BJ (cell line): ENCODE measurements at regions of chr7 and their contacts with region 1.

Region 1: DNA sequence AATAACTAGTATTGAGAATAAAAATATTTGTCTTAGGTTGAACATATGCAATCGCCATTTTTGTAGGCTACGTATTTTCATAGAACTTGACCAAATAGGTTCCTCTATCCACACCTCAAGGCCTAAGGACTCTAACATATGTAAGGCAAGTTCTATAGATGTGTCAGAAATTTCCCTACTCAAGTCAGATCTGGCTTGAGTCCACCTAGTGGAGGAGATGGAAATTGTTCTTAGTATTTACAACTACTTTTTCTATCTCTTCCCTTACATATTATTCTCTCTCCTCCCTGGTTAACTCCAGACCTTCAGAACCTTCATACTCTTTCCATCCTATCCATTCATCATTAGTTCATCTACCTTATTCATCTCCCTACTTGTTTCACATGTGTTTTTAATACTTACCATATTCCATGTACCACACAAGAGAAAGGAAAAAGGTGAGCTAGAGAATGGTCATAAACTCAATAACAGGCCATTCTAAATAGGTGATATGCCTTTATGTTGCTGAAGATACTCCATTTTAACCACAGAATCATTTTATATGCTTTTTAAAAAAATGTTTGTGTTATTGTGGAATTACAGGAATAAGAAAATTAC is 174.5 kb upstream of the HDAC9 start:
- DNase-seq: no peak
- H3K4me3 ChIP-seq: no peak overlapping the region
- H3K27me3 ChIP-seq: no peaks in the 10 kb centered on the region
- CTCF ChIP-seq: peak; percentile 63

Region 2: GRCh38 chr7:18276383-18276782 is 44.7 kb before region 1 on chr7:
- CTCF ChIA-PET with region 1: no interaction called
- POLR2A ChIA-PET with region 1: no interaction called
- DNase-seq: no peak
- H3K4me3 ChIP-seq: no peak overlapping the region
- H3K27me3 ChIP-seq: no peaks in the 10 kb centered on the region
- CTCF ChIP-seq: no peak

Region 3: GRCh38 chr7:18308938-18309337 is 12.1 kb before region 1 on chr7:
- CTCF ChIA-PET with region 1: interaction called, 10 read pairs
- POLR2A ChIA-PET with region 1: no interaction called
- DNase-seq: no peak
- H3K4me3 ChIP-seq: no peak overlapping the region
- H3K27me3 ChIP-seq: peaks cover 2% of the 10 kb centered on the region; the same call in 1 of the 2 replicates
- CTCF ChIP-seq: no peak

Region 4: GRCh38 chr7:18336626-18337025 is 15.6 kb after region 1 on chr7:
- CTCF ChIA-PET with region 1: no interaction called
- POLR2A ChIA-PET with region 1: no interaction called
- DNase-seq: no peak
- H3K4me3 ChIP-seq: no peak overlapping the region
- H3K27me3 ChIP-seq: no peaks in the 10 kb centered on the region
- CTCF ChIP-seq: no peak

Region 5: DNA sequence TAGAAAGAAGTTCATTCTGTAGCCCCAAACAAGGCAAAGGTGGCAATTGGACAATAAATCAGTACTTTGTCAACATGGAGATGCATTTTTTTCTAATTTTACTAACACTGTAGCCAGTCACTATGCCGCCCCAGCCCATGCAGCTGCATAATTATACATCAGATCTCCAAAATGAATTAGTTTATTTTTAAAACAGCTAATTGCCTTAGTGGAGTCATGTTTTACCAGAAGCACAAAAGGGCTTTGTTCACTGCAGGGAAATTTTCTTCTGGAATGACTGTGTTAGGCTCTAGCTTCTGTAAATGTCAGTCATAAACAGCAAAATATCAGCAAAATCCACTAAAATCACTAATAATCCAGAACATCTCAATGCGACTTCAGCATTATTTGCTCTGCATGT is 154.4 kb after region 1 on chr7:
- CTCF ChIA-PET with region 1: no interaction called
- POLR2A ChIA-PET with region 1: no interaction called
- DNase-seq: no peak
- H3K4me3 ChIP-seq: no peak overlapping the region
- H3K27me3 ChIP-seq: no peaks in the 10 kb centered on the region
- CTCF ChIP-seq: no peak